ENCODE measurements at regions of chr19 and their contacts with region 1.

Region 1: DNA sequence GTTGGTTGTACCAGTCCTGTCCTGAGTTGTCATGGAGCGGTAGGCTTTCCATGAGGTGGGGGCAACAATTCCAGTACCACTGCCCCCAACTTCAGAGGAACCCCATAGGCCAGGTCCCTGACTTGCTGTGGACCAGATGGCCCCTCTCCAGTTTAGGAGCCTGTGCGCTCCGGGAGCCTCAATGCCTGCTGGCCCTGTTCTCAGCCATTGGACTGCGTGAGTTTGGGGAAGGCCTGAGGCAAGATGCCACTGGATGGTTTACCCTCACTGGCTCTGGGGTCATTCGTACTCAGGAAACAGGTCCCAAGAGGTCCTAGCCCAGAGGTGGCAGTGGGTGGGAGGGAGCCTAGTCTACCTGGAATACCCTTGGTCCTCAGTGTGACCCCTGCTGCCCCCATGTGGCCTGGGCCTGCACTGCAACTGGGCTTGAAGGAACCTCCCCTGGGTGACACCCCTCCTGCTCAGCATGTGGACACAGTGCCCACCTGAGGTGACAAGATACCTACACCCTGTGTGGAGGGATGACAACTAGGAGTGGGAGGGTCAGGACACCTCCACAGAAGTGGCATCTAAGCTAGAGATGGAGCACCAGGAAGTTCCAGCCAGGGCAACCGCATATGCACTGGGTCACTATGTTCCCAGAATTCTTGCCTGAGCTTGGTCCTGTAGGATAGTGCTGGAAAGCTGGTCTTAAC is 6.0 kb upstream of the PRR19 start:
- DNase-seq: no peak
- H3K4me3 ChIP-seq: no peak overlapping the region
- H3K27ac ChIP-seq: no peak overlapping the region
- H3K4me1 ChIP-seq: peaks cover 0 to 22% (median 6%) of the 10 kb centered on the region in 3 donors
- H3K27me3 ChIP-seq: no peaks in the 10 kb centered on the region
- CTCF ChIP-seq: peak; percentile 88 to 97 (median 93)
- POLR2A ChIP-seq: no peak

Region 2: GRCh38 chr19:42244347-42245220 is 51.4 kb before region 1 on chr19:
- intact Hi-C with region 1: loop called (anchors 10 kb)
- DNase-seq: peak; percentile 66
- H3K4me3 ChIP-seq: peak overlapping the region; percentile 80 to 98 (median 90)
- H3K27ac ChIP-seq: peak overlapping the region; percentile 89 to 98 (median 96)
- H3K4me1 ChIP-seq: peaks cover 20 to 87% (median 28%) of the 10 kb centered on the region in 3 donors
- H3K27me3 ChIP-seq: no peaks in the 10 kb centered on the region
- CTCF ChIP-seq: peak; percentile 59 to 84 (median 68)
- POLR2A ChIP-seq: peak in 3 of 4 donors; percentile 14 to 74 (median 49)